ENCODE measurements at regions of chr5 and their contacts with region 1.

Region 1: DNA sequence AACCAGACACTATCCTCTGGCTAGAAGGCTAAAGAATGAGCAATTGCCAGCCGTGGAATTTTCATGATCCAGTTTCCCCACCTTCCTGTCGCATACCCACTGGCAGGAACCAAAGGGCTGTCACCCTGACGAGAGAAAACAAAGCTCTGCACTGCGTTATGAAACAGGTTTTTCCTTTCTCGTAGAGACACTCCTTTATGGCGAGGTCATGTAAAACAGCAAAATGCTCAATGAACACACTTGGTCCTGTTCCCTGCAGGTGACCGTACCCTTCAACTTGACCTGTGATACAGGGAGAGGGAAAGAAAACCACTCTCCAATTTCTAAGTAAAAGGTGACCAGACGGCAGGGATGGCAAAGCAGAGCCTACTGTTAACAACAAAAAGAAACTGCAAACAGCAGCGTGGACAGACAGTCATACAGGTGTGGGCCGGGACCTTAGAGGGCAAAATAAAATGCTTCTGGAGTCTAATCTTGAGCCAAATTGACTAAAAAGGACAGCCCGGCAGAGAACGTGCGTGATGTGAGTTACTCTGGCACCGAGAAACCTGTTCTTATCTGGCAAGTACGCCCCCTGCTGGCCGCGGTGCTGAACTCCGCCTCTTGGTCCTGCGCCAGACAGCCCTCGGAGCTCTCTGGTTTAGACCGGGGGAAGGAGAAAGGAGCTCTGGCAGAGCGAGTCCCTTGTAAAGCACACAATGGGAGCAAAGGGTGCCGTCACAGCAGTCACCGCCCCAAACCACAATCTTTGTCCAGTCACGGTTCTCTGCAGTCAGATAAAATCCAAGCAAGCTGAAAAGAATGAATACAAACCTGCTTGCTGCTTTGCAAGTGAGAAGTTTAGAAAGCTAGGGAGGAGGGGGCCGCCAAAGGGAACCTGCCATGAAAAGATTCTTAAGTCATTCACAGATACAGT is 98.9 kb downstream of the EFNA5 start:
- DNase-seq: peak; percentile 94
- H3K4me3 ChIP-seq: peak overlapping the region; percentile 60
- H3K27ac ChIP-seq: peak overlapping the region; percentile 96
- H3K4me1 ChIP-seq: peaks cover 63% of the 10 kb centered on the region
- CTCF ChIP-seq: peak; percentile 96

Region 2: DNA sequence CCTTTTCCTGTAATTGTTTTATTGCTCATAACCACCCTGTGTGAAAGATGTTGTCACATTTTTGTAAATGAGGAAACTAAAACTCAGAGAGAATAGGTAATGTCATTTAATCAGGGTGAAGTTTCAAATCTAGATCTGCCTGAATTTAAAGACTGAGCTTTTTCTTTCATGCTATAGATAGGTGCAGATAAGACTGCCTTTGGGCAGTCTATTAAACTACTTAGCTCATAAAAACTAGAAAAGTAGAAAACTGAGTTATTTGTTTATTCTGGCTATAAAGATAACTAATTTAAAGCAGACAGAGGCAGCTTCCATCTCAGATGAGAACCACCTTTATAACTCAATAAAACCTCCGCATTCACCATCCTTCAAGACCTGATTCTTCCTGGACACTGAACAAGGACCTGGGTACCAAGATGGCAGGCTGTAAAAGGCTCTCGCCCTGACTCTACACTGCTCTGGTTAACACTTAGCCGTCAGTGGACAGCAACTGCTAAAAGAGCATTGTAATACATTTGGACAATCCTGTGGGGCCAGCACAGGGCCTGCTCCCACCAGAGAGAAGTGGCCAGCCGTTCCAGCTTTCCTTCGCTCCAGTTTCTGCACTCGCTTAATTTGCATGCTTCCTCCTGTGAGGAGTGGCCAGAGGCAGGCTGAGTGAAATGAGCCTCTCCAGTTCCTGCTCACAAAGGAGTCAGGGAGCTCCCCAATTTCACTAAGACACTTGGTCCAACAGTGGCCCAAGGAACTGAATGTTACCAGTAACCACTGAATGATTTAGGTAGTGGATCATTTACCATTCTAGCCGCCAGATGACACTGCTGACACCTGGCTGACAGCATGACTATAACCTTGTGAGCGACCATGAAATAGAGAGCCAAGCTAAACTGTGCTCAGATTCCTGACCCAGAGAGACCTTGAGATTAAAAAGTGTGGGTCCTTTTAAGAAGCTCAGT is 467.6 kb before region 1 on chr5:
- CTCF ChIA-PET with region 1: interaction called, 3 read pairs
- POLR2A ChIA-PET with region 1: no interaction called
- intact Hi-C with region 1: loop called (anchors 1 kb)
- DNase-seq: peak; percentile 75
- H3K4me3 ChIP-seq: no peak overlapping the region
- H3K27ac ChIP-seq: no peak overlapping the region
- H3K4me1 ChIP-seq: peaks cover 6% of the 10 kb centered on the region
- CTCF ChIP-seq: peak; percentile 78

Region 3: GRCh38 chr5:107373549-107374263 is 198.2 kb before region 1 on chr5:
- CTCF ChIA-PET with region 1: interaction called, 3 read pairs
- POLR2A ChIA-PET with region 1: interaction called, 4 read pairs
- intact Hi-C with region 1: loop called (anchors 5 kb)
- DNase-seq: peak; percentile 81
- H3K4me3 ChIP-seq: peak overlapping the region; percentile 51
- H3K27ac ChIP-seq: peak overlapping the region; percentile 69
- H3K4me1 ChIP-seq: peaks cover 63% of the 10 kb centered on the region
- CTCF ChIP-seq: no peak

Region 4: GRCh38 chr5:107466233-107466769 is 105.6 kb before region 1 on chr5:
- CTCF ChIA-PET with region 1: no interaction called
- POLR2A ChIA-PET with region 1: interaction called, 10 read pairs
- intact Hi-C with region 1: no loop called
- DNase-seq: no peak
- H3K4me3 ChIP-seq: no peak overlapping the region
- H3K27ac ChIP-seq: no peak overlapping the region
- H3K4me1 ChIP-seq: peaks cover 78% of the 10 kb centered on the region
- CTCF ChIP-seq: no peak

Region 5: DNA sequence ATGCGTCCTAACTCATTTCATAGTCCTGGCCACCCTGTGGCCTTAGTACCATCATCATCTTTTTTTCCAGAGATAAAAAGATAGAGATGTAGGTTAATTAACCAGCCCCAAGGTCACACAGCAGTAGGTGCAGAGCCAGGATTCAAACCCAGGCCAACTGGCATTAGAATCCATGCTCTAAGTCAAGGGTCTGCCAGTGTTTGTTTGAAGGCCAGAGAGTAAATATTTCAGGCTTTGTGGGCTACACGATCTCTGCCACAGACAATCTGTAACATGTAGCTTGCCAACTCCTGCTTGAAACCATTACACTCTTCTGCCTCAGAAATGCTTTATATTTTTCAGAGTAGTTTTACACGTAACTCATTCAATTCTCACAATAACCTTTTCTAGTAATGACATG is 20.8 kb before region 1 on chr5:
- CTCF ChIA-PET with region 1: interaction called, 3 read pairs
- POLR2A ChIA-PET with region 1: interaction called, 218 read pairs
- intact Hi-C with region 1: loop called (anchors 1 kb)
- DNase-seq: no peak
- H3K4me3 ChIP-seq: no peak overlapping the region
- H3K27ac ChIP-seq: no peak overlapping the region
- H3K4me1 ChIP-seq: peaks cover 81% of the 10 kb centered on the region
- CTCF ChIP-seq: no peak

Region 6: DNA sequence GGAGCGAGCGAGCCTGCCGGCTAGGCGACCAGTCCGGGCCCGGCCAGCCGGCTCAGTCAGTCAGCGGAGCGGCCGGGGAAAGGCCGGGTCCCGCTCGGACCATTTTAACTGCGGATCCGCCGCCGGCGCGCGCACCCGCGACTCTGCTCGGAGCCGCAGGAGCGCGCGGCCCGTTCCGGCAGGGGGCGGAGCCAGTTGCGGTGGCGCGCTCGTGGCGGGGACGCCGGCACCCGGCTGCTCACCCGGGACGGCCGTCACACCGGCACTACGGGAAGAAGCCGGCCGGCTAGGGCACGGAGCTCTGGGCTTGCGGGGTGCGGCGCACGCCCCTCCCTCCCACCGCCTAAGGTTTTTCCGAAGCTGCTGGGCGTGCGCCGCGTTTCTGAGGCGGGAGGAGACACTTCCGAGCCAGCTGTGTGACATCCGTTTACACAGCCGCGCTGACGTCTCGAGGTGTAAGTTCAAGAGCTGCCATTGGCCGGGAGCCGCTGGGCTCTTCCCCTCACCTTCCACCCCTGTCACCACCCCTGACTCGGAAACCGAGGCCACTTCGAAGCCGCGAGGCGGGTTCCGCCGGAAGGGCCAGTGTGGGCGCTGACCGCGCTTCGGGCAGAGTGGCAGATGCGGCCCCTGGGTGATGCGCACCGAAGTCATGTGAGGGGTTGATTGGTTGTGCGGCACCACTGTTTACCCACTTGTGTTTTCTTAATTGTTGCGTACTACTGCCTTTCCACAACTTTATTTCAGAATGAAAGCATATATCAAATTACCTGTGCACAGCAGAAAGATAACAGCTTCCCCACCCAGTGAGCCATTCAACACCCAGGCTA is 810.3 kb after region 1 on chr5 and contains the start of gene FBXL17:
- CTCF ChIA-PET with region 1: no interaction called
- POLR2A ChIA-PET with region 1: interaction called, 3 read pairs
- intact Hi-C with region 1: loop called (anchors 5 kb)
- DNase-seq: peak; percentile 96
- H3K4me3 ChIP-seq: peak within 1 kb of the TSS; percentile 92
- H3K27ac ChIP-seq: peak within 1 kb of the TSS; percentile 92
- H3K4me1 ChIP-seq: peaks cover 28% of the 10 kb centered on the region
- CTCF ChIP-seq: no peak
- total RNA-seq, gene FBXL17: 10.2 TPM in 2 replicates